Natural killer cell (primary cell): ENCODE measurements at regions of chr12 and their contacts with region 1.

Region 1: GRCh38 chr12:110079477-110080400 is 31.4 kb upstream of the C12orf76 start:
- DNase-seq: peak; percentile 72 to 88
- ATAC-seq: peak; percentile 90 to 91 (median 90)
- H3K4me3 ChIP-seq: peak overlapping the region; percentile 42
- H3K4me3 Mint-ChIP-seq: peak overlapping the region; percentile 85
- H3K27ac ChIP-seq: peak overlapping the region; percentile 92
- H3K27ac Mint-ChIP-seq: peak overlapping the region; percentile 92 to 95
- H3K4me1 ChIP-seq: peaks cover 24% of the 10 kb centered on the region
- H3K4me1 Mint-ChIP-seq: peaks cover 15 to 21% of the 10 kb centered on the region in 2 donors
- H3K27me3 ChIP-seq: no peaks in the 10 kb centered on the region
- H3K27me3 Mint-ChIP-seq: no peaks in the 10 kb centered on the region
- CTCF ChIP-seq: no peak

Region 2: GRCh38 chr12:110048242-110049027 is 31.3 kb before region 1 on chr12 and contains the start of gene C12orf76:
- intact Hi-C with region 1: loop called (anchors 1 kb)
- DNase-seq: peak; percentile 80 to 98
- ATAC-seq: peak; percentile 99 to 100 (median 100)
- H3K4me3 ChIP-seq: peak within 1 kb of the TSS; percentile 66
- H3K4me3 Mint-ChIP-seq: peak within 1 kb of the TSS; percentile 88
- H3K27ac ChIP-seq: peak within 1 kb of the TSS; percentile 73
- H3K27ac Mint-ChIP-seq: peak within 1 kb of the TSS; percentile 87 to 93
- H3K4me1 ChIP-seq: peaks cover 20% of the 10 kb centered on the region
- H3K4me1 Mint-ChIP-seq: peaks cover 13 to 27% of the 10 kb centered on the region in 2 donors
- H3K27me3 ChIP-seq: no peaks in the 10 kb centered on the region
- H3K27me3 Mint-ChIP-seq: no peaks in the 10 kb centered on the region
- CTCF ChIP-seq: no peak
- total RNA-seq, gene C12orf76: 9.9 to 12.1 (median 10.9) TPM

Region 3: DNA sequence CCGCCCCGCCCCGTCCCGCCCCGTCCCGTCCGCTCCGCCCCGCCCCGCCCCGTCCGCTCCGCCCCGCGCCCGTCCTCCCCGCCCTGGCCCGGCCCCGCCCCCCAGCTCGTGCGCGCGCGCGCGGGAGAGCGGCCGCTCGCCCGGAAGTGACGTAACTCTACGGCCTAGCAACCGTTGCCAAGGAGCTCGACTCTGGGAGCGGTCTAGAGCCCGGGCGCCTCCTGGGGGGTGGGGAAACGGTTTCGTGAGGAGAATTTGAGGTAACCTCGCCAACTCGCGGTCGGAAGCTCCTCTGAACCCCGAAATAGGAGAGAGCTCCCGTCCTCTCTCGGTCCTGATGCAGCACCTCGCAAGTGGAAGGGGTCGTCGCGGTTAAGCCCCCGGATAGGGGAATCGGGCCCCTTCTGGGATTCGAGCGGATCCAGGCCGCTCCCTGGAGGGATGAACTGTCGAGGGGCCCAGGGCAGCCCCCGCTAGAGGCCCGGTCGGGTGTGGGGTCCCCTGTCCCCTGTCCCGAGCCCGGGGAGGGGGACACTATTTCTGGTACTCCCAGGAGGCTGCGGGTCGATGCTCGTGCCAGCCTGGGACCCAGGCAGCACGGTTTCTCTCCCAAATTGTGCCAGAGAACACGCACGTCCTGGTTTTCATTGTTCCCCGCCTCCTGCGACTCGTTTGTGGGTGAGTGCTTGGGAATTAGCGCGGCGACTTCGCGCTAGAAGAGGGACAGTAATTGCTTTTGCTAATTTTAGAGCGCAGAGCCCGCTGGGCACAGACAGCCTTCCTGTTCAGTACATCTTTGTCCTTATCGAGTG is 44.7 kb after region 1 on chr12 and contains the start of gene IFT81:
- intact Hi-C with region 1: loop called (anchors 1 kb)
- DNase-seq: peak; percentile 95 to 97
- ATAC-seq: peak; percentile 92 to 97 (median 95)
- H3K4me3 ChIP-seq: peak within 1 kb of the TSS; percentile 69
- H3K4me3 Mint-ChIP-seq: peak within 1 kb of the TSS; percentile 90
- H3K27ac ChIP-seq: peak within 1 kb of the TSS; percentile 39
- H3K27ac Mint-ChIP-seq: peak within 1 kb of the TSS; percentile 67 to 83
- H3K4me1 ChIP-seq: peaks cover 10% of the 10 kb centered on the region
- H3K4me1 Mint-ChIP-seq: peaks cover 0 to 5% of the 10 kb centered on the region in 2 donors
- H3K27me3 ChIP-seq: no peaks in the 10 kb centered on the region
- H3K27me3 Mint-ChIP-seq: peaks cover 0 to 12% of the 10 kb centered on the region in 2 donors
- CTCF ChIP-seq: no peak
- total RNA-seq, gene IFT81: 0.61 to 1.4 (median 0.80) TPM

Region 4: GRCh38 chr12:110165540-110166159 is 85.9 kb after region 1 on chr12:
- intact Hi-C with region 1: no loop called
- DNase-seq: no peak
- ATAC-seq: no peak
- H3K4me3 ChIP-seq: no peak overlapping the region
- H3K4me3 Mint-ChIP-seq: no peak overlapping the region
- H3K27ac ChIP-seq: no peak overlapping the region
- H3K27ac Mint-ChIP-seq: no peak overlapping the region
- H3K4me1 ChIP-seq: no peaks in the 10 kb centered on the region
- H3K4me1 Mint-ChIP-seq: no peaks in the 10 kb centered on the region
- H3K27me3 ChIP-seq: no peaks in the 10 kb centered on the region
- H3K27me3 Mint-ChIP-seq: no peaks in the 10 kb centered on the region
- CTCF ChIP-seq: no peak

Region 5: GRCh38 chr12:110403146-110403975 is 323.6 kb after region 1 on chr12 and contains the start of gene ANAPC7:
- intact Hi-C with region 1: loop called (anchors 1 kb)
- DNase-seq: peak; percentile 78 to 93
- ATAC-seq: peak; percentile 96 to 98 (median 96)
- H3K4me3 ChIP-seq: peak within 1 kb of the TSS; percentile 78
- H3K4me3 Mint-ChIP-seq: peak within 1 kb of the TSS; percentile 99
- H3K27ac ChIP-seq: peak within 1 kb of the TSS; percentile 91
- H3K27ac Mint-ChIP-seq: peak within 1 kb of the TSS in 1 of 2 donors; percentile 97
- H3K4me1 ChIP-seq: peaks cover 18% of the 10 kb centered on the region
- H3K4me1 Mint-ChIP-seq: peaks cover 12 to 19% of the 10 kb centered on the region in 2 donors
- H3K27me3 ChIP-seq: no peaks in the 10 kb centered on the region
- H3K27me3 Mint-ChIP-seq: no peaks in the 10 kb centered on the region
- CTCF ChIP-seq: no peak
- total RNA-seq, gene ANAPC7: 46.5 to 77.0 (median 50.4) TPM